ENCODE measurements at regions of chr15 and their contacts with region 1.

Region 1: DNA sequence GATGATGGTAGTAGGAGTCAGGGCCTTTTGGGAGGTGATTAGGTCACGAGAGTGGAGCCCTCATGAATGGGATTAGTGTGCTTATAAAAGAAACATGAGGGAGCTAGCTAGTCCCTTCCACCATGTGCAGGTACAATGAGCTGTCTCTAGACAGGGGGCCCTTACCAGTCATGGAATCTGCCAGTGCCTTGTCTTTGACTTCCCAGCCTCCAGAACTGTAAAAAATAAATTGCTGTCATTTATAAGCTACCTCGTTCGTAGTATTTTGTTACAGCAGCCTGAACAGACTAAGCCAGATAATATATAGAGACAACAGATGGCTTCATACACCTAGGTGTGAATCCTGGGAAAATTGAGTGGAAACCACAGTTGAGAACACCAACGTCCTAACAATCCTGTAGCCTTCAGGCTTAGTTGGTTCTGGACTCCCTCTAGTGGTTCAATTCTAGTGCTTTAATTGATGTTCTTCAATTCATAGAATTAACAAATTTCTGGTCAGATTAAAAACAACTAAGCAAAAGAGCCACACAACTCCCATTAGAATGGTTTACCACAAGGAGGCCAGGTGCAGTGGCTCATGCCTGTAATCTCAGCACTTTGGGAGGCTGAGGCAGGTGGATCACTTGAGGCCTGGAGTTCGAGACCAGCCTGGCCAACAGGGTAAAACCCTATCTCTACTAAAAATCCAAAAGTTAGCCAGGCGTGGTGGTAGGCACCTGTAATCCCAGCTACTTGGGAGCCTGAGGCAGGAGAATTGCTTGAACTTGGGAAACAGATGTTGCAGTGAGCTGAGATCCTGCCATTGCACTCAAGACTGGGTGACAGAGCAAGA is 21.3 kb upstream of the GATM start:
- DNase-seq: no peak
- ATAC-seq: no peak

Region 2: DNA sequence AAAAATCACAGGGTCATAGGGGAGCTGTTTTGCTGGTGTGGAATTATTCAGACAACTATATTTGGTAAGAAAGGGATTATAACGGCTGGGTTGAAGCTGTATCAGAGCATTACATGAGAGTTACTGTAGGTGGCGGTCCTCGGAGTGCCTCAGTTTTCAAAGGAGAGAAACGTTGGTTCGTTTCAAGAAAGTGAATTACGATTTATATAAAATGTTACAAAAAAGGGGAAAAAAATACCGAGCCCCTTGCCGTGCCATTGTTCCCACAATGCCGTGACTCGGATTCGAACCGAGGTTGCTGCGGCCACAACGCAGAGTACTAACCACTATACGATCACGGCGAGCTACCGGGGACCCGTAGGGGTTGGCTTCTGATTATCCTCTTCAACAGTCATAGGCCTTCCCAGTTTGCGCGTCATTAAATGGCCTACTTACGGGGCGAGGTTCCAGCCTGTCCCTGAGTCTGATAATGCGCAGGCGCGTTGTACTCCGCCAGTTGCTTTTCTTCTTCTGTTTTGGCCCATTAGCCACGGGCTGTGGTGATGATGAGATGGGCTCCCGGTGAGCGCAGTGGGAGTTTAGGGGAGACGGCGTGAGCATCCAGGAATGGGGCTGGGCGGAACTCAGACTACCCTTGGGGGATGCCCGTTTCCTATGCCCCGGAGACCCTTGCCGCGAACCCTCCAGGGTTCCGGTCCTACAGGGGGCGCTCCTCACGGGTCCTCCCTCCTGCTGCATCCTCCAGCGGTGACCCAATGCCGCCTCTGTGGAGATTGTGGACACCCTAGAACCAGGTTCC is 201.1 kb before region 1 on chr15:
- intact Hi-C with region 1: loop called in 1 of 2 experiments (anchors 10 kb)
- DNase-seq: peak; percentile 94
- ATAC-seq: peak; percentile 80 to 81

Region 3: DNA sequence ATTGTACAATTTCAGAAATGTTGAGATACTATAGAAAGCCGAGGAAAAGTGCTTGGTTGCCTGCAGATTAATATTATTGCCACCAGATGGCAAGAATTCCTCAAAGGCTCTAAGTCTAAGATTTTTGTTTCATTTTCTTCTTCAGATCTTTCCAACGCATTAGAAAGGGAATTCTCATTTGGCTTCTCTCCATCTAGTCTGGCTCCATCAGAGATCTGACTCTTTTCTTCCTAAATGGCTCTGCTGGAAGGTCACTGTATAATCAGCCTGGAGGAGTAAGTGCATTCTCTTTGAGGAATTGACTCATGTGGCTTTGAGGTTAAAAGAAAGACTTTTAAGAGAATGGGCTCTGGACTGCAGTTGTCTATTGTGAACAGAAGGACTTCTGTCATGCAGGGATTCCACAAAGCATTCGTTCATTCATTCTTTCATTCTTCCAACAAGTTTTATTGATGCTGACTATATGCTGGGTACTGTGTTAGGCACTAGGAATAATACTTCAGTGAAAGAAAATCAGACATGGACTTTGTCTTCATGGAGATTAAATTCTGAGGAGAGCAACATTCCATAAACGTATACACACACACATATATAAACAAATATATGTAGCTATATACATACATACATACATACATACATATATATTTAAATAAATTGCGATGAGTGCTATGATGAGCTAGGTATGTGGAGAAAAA is 92.2 kb before region 1 on chr15:
- intact Hi-C with region 1: loop called (anchors 2 to 5 kb)
- DNase-seq: no peak
- ATAC-seq: peak; percentile 61 to 87

Region 4: DNA sequence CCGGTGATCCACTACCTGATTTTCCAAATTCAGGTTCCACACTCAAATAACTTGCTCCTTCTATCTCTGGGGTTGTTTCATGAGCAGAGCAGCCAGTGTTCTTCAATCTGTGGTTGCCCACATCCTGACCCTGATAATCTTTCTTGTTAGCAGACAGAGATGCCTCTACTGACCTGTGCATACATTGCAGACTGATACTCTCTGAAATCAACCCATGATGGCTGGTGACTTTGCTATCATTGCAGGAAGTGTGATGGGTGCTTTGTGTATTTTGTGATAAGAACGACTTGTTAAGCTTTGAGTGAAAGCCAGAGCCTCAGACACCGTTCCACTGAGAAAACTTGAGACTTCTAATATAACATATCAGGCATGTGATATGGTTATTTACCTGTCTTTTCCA is 61.2 kb before region 1 on chr15:
- intact Hi-C with region 1: no loop called
- DNase-seq: no peak
- ATAC-seq: no peak

Region 5: GRCh38 chr15:45468294-45468693 is 68.7 kb after region 1 on chr15:
- intact Hi-C with region 1: no loop called
- DNase-seq: no peak
- ATAC-seq: no peak